HEK293 (cell line): ENCODE measurements at regions of chr2 and their contacts with region 1.

Region 1: GRCh38 chr2:68487773-68488355 is 20.5 kb downstream of the APLF start:
- H3K4me3 ChIP-seq: no peak overlapping the region
- H3K27ac ChIP-seq: no peak overlapping the region
- H3K4me1 ChIP-seq: no peaks in the 10 kb centered on the region
- CTCF ChIP-seq: no peak

Region 2: GRCh38 chr2:68391869-68392268 is 96.0 kb before region 1 on chr2:
- CTCF ChIA-PET with region 1: no interaction called
- POLR2A ChIA-PET with region 1: no interaction called
- H3K4me3 ChIP-seq: no peak overlapping the region
- H3K27ac ChIP-seq: no peak overlapping the region
- H3K4me1 ChIP-seq: no peaks in the 10 kb centered on the region
- CTCF ChIP-seq: no peak

Region 3: DNA sequence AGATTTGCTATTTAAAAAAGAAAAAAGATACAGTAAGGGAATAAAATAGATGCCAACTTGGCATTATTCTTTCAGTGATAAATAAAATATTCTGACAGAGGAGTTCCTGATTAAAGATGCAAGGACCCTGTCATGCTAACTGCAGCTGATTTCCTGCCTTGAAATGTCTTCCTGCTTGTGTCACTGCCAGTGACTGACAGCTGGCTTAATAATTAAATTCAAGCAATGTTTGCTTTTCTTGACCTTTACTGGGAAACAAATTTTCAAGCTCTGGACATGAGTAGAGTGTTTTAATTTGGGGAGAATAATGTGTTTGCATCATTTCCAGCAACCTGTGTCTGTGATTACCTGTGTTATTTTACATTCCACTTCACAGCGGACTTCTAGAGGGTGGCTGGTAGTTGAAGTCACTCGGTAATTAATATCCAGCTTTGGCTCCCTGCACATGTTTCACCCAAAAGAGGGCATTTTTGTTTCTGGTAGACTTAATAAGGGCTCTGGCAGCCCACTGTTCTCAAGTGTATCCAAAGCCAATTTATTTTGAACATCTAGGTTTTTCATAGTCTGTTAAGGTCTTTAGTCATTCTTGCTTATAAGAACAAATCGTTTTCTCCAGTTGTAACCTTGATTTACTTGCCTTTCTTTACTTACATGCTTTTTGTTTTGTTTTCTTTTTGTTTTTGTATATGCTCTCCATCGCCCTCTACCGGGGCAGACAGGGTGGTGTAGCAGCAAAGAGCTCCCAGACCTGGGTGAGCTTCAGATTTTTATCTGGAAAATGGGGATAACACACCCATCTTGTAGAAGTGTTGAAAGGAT is 107.0 kb after region 1 on chr2:
- CTCF ChIA-PET with region 1: interaction called, 14 read pairs
- POLR2A ChIA-PET with region 1: no interaction called
- H3K4me3 ChIP-seq: no peak overlapping the region
- H3K27ac ChIP-seq: no peak overlapping the region
- H3K4me1 ChIP-seq: no peaks in the 10 kb centered on the region
- CTCF ChIP-seq: peak; percentile 41; the same call in 1 of the 2 replicates

Region 4: GRCh38 chr2:68646302-68646701 is 158.4 kb after region 1 on chr2:
- CTCF ChIA-PET with region 1: interaction called, 11 read pairs
- POLR2A ChIA-PET with region 1: no interaction called
- H3K4me3 ChIP-seq: no peak overlapping the region
- H3K27ac ChIP-seq: no peak overlapping the region
- H3K4me1 ChIP-seq: no peaks in the 10 kb centered on the region
- CTCF ChIP-seq: no peak; the same call in 1 of the 2 replicates

Region 5: GRCh38 chr2:68709421-68709911 is 221.6 kb after region 1 on chr2:
- CTCF ChIA-PET with region 1: interaction called, 10 read pairs
- POLR2A ChIA-PET with region 1: no interaction called
- H3K4me3 ChIP-seq: no peak overlapping the region
- H3K27ac ChIP-seq: no peak overlapping the region
- H3K4me1 ChIP-seq: no peaks in the 10 kb centered on the region; the same call in 1 of the 2 replicates
- CTCF ChIP-seq: 0 out of 2 replicates have a peak, but pooled peaks have one; percentile 45

Region 6: GRCh38 chr2:68715353-68716041 is 227.6 kb after region 1 on chr2:
- CTCF ChIA-PET with region 1: interaction called, 14 read pairs
- POLR2A ChIA-PET with region 1: no interaction called
- H3K4me3 ChIP-seq: no peak overlapping the region
- H3K27ac ChIP-seq: no peak overlapping the region
- H3K4me1 ChIP-seq: no peaks in the 10 kb centered on the region
- CTCF ChIP-seq: peak; percentile 26; the same call in 1 of the 2 replicates

Region 7: GRCh38 chr2:68813596-68813995 is 325.7 kb after region 1 on chr2:
- CTCF ChIA-PET with region 1: no interaction called
- POLR2A ChIA-PET with region 1: no interaction called
- H3K4me3 ChIP-seq: no peak overlapping the region
- H3K27ac ChIP-seq: no peak overlapping the region
- H3K4me1 ChIP-seq: no peaks in the 10 kb centered on the region
- CTCF ChIP-seq: no peak

Region 8: GRCh38 chr2:69214898-69215297 is 727.0 kb after region 1 on chr2:
- CTCF ChIA-PET with region 1: no interaction called
- POLR2A ChIA-PET with region 1: no interaction called
- H3K4me3 ChIP-seq: no peak overlapping the region
- H3K27ac ChIP-seq: no peak overlapping the region
- H3K4me1 ChIP-seq: peaks cover 8% of the 10 kb centered on the region
- CTCF ChIP-seq: no peak